ENCODE measurements at regions of chrX and their contacts with region 1.

Region 1: GRCh38 chrX:79161655-79162054 is 17.2 kb downstream of the GPR174 start:
- DNase-seq: peak; percentile 54
- H3K4me3 Mint-ChIP-seq: peak overlapping the region; percentile 89
- H3K27ac Mint-ChIP-seq: peak overlapping the region; percentile 97
- H3K4me1 Mint-ChIP-seq: peaks cover 74% of the 10 kb centered on the region
- H3K27me3 Mint-ChIP-seq: no peaks in the 10 kb centered on the region

Region 2: DNA sequence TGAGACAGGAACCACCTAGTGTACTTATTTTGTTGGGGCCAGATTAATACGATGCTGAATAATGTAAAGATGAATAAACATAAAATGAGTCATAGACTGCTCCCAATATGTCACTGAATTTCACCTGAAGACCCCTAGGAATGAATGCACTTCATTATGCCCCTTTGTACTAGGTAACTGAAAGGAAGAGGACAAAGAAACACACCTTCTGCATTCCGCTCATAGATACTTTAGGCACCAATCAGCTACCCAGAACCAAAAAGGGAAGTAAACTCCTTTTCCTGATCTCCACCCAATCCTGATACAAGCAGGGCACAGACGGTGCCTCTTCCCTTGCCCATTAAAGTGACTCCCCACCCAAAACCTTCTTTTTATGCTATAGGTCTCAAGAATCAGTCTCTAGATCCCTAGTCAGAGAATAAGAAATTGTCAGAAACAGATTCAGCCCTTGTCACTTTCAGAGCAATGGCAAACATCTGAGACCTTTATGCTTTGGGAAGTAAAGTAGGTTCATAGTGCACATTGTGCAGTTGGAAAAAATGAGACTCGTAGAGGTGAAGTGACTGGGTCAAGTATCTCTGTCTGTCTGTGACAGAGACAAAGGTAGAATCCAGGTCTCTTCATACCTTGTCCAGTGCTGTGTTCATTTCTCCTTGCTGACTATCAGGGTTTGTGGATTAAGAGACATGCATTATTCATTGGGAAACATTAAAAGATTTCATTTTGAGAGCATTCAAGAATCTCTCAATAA is 14.8 kb before region 1 on chrX:
- CTCF ChIA-PET with region 1: interaction called, 5 read pairs
- POLR2A ChIA-PET with region 1: interaction called, 147 read pairs
- DNase-seq: no peak
- H3K4me3 Mint-ChIP-seq: peak overlapping the region; percentile 96
- H3K27ac Mint-ChIP-seq: peak overlapping the region; percentile 78
- H3K4me1 Mint-ChIP-seq: peaks cover 43% of the 10 kb centered on the region
- H3K27me3 Mint-ChIP-seq: no peaks in the 10 kb centered on the region

Region 3: GRCh38 chrX:79281775-79282174 is 120.1 kb after region 1 on chrX:
- CTCF ChIA-PET with region 1: no interaction called
- POLR2A ChIA-PET with region 1: no interaction called
- DNase-seq: no peak
- H3K4me3 Mint-ChIP-seq: no peak overlapping the region
- H3K27ac Mint-ChIP-seq: no peak overlapping the region
- H3K4me1 Mint-ChIP-seq: peaks cover 7% of the 10 kb centered on the region
- H3K27me3 Mint-ChIP-seq: no peaks in the 10 kb centered on the region